WTC11 (cell line): ENCODE measurements at regions of chr17 and their contacts with region 1.

Region 1: GRCh38 chr17:81484195-81484979 is 28.2 kb downstream of the ACTG1 start:
- DNase-seq: peak; percentile 93
- ATAC-seq: peak; percentile 64
- H3K4me3 Mint-ChIP-seq: peak overlapping the region; percentile 52
- H3K27ac Mint-ChIP-seq: no peak overlapping the region
- H3K4me1 Mint-ChIP-seq: peaks cover 11% of the 10 kb centered on the region
- H3K27me3 Mint-ChIP-seq: peaks cover 64% of the 10 kb centered on the region
- CTCF ChIP-seq: peak; percentile 96

Region 2: GRCh38 chr17:81291662-81292061 is 192.7 kb before region 1 on chr17:
- CTCF ChIA-PET with region 1: interaction called, 16 read pairs
- POLR2A ChIA-PET with region 1: no interaction called
- DNase-seq: peak; percentile 76
- ATAC-seq: peak; percentile 41
- H3K4me3 Mint-ChIP-seq: no peak overlapping the region
- H3K27ac Mint-ChIP-seq: no peak overlapping the region
- H3K4me1 Mint-ChIP-seq: peaks cover 14% of the 10 kb centered on the region
- H3K27me3 Mint-ChIP-seq: no peaks in the 10 kb centered on the region
- CTCF ChIP-seq: peak; percentile 55

Region 3: DNA sequence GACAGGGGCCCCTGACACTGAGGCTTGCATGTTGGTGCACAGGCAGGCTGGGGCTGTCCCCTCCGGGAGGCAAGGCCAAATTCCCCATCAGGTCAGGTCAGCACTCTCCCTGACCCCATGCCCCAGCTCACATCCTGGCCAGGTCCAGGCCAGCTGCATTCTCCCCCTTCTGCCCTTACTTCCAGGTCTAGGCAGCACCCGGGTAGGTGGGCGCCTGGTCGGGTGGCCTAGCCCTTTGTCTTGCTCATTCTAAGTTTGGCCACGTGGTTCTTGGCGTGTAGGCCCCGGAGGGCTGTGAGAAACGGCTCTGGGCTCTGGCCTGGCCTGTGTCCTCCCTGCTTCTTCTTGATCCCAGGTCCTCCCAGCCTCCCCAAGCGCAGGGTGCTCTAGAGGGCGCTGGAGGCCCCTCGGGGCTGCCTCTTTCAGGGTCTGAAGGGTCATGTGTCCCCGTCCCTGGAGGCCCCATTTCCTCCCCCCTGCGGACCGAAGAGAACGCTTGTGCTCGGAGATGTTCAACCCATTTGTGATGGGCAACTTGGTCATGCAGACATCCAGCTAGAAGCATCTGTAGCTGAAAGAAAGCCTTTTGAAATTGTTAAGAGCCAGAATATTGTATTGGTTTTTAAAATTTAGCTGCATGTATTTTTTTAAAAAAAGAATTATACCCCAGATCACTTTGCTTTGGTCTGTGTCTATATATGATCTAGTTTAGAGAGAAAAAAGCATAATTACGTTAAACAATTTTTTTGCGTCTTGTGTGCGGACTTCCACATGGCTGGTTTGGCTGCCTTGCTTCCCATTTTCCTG is 82.5 kb before region 1 on chr17:
- CTCF ChIA-PET with region 1: interaction called, 55 read pairs
- POLR2A ChIA-PET with region 1: interaction called, 4 read pairs
- DNase-seq: peak; percentile 71
- ATAC-seq: peak; percentile 16
- H3K4me3 Mint-ChIP-seq: peak overlapping the region; percentile 74
- H3K27ac Mint-ChIP-seq: peak overlapping the region; percentile 77
- H3K4me1 Mint-ChIP-seq: peaks cover 70% of the 10 kb centered on the region
- H3K27me3 Mint-ChIP-seq: peaks cover 88% of the 10 kb centered on the region
- CTCF ChIP-seq: no peak

Region 4: DNA sequence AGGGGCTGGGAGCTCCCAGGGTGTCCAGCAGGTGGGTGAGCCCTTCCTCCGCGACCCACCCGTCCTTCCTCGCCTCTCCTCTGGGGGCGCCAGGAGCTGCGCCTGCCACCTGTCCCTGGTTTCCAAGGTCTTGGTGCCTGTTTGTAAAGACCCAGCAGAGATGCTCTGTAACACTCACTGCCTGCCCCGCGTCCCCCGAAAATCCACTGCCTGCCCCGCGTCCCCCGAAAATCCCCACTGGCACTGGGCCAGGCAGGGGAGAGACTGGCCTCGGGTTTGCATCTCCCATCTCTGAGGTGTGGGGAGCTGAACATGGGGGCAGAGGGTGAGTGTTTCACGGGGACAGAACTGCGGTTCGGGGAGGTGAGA is 43.5 kb before region 1 on chr17:
- CTCF ChIA-PET with region 1: interaction called, 62 read pairs
- POLR2A ChIA-PET with region 1: no interaction called
- DNase-seq: peak; percentile 84
- ATAC-seq: peak; percentile 77
- H3K4me3 Mint-ChIP-seq: no peak overlapping the region
- H3K27ac Mint-ChIP-seq: no peak overlapping the region
- H3K4me1 Mint-ChIP-seq: no peaks in the 10 kb centered on the region
- H3K27me3 Mint-ChIP-seq: no peaks in the 10 kb centered on the region
- CTCF ChIP-seq: peak; percentile 79

Region 5: DNA sequence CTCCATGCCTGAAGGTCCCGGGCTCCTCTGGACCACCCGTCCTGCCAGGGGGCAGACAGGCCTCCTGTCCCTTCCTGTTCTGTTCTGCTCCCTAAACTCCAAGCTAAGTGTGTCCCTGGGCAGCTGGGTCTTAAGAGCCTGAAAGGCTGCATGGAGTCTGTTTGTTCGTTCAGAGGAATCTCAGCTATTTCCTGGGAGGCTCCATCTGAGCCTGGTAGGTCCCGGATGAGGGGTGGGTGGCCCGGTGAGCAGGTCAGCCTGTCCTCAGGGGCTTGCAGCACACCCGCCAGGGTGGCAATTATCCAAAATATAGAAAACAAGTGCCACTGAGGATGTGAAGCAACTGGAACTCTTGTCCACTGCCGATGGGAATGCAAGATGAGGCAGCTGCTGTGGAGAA is 15.7 kb after region 1 on chr17:
- CTCF ChIA-PET with region 1: interaction called, 10 read pairs
- POLR2A ChIA-PET with region 1: interaction called, 7 read pairs
- DNase-seq: no peak
- ATAC-seq: peak; percentile 59
- H3K4me3 Mint-ChIP-seq: no peak overlapping the region
- H3K27ac Mint-ChIP-seq: no peak overlapping the region
- H3K4me1 Mint-ChIP-seq: peaks cover 6% of the 10 kb centered on the region; the same call in 1 of the 2 replicates
- H3K27me3 Mint-ChIP-seq: peaks cover 38% of the 10 kb centered on the region
- CTCF ChIP-seq: no peak

Region 6: GRCh38 chr17:81537343-81537855 is 53.0 kb after region 1 on chr17:
- CTCF ChIA-PET with region 1: interaction called, 13 read pairs
- POLR2A ChIA-PET with region 1: no interaction called
- DNase-seq: peak; percentile 81
- ATAC-seq: peak; percentile 79
- H3K4me3 Mint-ChIP-seq: peak overlapping the region; percentile 27
- H3K27ac Mint-ChIP-seq: no peak overlapping the region
- H3K4me1 Mint-ChIP-seq: no peaks in the 10 kb centered on the region
- H3K27me3 Mint-ChIP-seq: peaks cover 23% of the 10 kb centered on the region
- CTCF ChIP-seq: peak; percentile 60